Heart left ventricle (tissue), 16 donors: ENCODE measurements at regions of chr6 and their contacts with region 1.

Region 1: GRCh38 chr6:170137176-170137891 is 153.5 kb downstream of the DLL1 start:
- DNase-seq: peak; percentile 64 to 80 (median 67)
- ATAC-seq: peak; percentile 68 to 87 (median 74)
- H3K4me3 ChIP-seq: peak overlapping the region in 8 of 12 donors; percentile 5 to 47 (median 35)
- H3K27ac ChIP-seq: peak overlapping the region; percentile 74 to 91 (median 82)
- H3K4me1 ChIP-seq: peaks cover 4 to 47% (median 24%) of the 10 kb centered on the region in 12 donors
- H3K27me3 ChIP-seq: no peaks in the 10 kb centered on the region
- CTCF ChIP-seq: no peak
- POLR2A ChIP-seq: no peak

Region 2: DNA sequence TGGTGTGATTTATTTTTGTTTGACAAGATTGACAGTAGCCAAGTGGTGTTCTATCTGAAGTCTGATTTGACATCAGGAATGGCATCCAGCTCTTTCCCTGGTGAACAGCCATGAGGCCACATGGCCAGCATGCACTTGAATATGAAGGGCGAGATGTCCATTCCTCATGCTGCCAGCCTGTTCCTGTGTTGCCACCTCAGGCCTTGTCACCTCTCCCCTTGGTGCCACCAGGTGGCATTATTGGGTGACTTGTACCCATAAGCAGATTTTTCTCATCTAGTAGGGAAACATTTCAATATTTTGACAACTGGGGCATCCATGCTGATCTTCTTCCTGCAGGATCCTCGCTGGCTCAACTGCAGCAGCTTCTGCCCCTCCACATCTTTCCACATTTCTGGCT is 186.8 kb before region 1 on chr6:
- intact Hi-C with region 1: no loop called
- DNase-seq: no peak
- ATAC-seq: peak in 2 of 4 donors; percentile 54 to 62
- H3K4me3 ChIP-seq: no peak overlapping the region
- H3K27ac ChIP-seq: no peak overlapping the region
- H3K4me1 ChIP-seq: no peaks in the 10 kb centered on the region
- H3K27me3 ChIP-seq: no peaks in the 10 kb centered on the region
- CTCF ChIP-seq: peak; percentile 4 to 45 (median 24)
- POLR2A ChIP-seq: no peak

Region 3: GRCh38 chr6:170024952-170025911 is 112.1 kb before region 1 on chr6:
- intact Hi-C with region 1: loop called in 2 of 10 experiments (anchors 5 kb)
- DNase-seq: peak in 2 of 5 donors; percentile 41 to 80
- ATAC-seq: peak; percentile 39 to 75 (median 54)
- H3K4me3 ChIP-seq: no peak overlapping the region
- H3K27ac ChIP-seq: peak overlapping the region in 2 of 12 donors; percentile 8 to 55
- H3K4me1 ChIP-seq: peaks cover 0 to 14% (median 3%) of the 10 kb centered on the region in 12 donors
- H3K27me3 ChIP-seq: peaks cover 0 to 13% (median 4%) of the 10 kb centered on the region in 9 donors
- CTCF ChIP-seq: no peak
- POLR2A ChIP-seq: no peak

Region 4: GRCh38 chr6:170049641-170050561 is 87.4 kb before region 1 on chr6:
- intact Hi-C with region 1: loop called in 2 of 10 experiments (anchors 5 kb)
- DNase-seq: peak; percentile 70 to 94 (median 88)
- ATAC-seq: peak; percentile 83 to 91 (median 91)
- H3K4me3 ChIP-seq: no peak overlapping the region
- H3K27ac ChIP-seq: peak overlapping the region in 11 of 12 donors; percentile 10 to 88 (median 57)
- H3K4me1 ChIP-seq: peaks cover 0 to 36% (median 10%) of the 10 kb centered on the region in 12 donors
- H3K27me3 ChIP-seq: no peaks in the 10 kb centered on the region
- CTCF ChIP-seq: no peak
- POLR2A ChIP-seq: no peak

Region 5: DNA sequence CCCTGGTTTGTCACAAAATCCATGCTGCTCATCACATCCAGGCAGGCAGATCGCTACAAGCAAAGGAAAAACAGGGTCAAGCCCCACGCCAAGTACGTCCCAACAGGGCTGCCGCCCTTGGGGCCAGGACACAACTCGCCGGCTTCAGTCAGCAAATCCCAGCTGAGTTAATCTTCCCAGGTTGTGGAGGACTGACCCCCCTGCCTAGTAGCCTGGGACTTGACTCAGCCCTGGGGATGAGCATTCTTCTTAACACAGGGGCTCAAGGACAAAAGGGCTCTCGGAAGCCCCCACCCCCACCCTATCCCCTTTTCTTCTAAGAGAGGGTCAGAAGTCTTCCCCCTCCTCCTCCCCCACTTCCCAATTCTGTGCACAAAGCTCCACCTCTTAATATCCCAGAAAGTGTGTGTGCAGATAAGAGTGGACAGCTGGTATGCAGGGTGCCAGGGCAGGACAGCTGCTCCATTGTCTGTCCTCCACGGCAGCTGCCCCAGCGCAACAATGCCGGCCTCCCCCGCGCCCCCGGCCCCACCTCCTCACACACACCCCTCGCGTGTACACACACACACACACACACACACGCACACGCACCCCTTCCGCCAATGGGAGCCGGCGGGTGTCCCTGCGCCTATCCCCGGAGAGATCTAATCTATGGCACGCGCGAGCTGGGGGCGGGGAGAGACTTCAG is 149.1 kb after region 1 on chr6:
- intact Hi-C with region 1: loop called in 2 of 10 experiments (anchors 5 to 10 kb)
- DNase-seq: peak in 2 of 5 donors; percentile 72 to 74
- ATAC-seq: peak; percentile 9 to 31 (median 24)
- H3K4me3 ChIP-seq: peak overlapping the region in 7 of 12 donors; percentile 3 to 95 (median 80)
- H3K27ac ChIP-seq: peak overlapping the region in 8 of 12 donors; percentile 31 to 90 (median 82)
- H3K4me1 ChIP-seq: peaks cover 8 to 58% (median 38%) of the 10 kb centered on the region in 12 donors
- H3K27me3 ChIP-seq: peaks cover 0 to 47% (median 0%) of the 10 kb centered on the region in 9 donors
- CTCF ChIP-seq: no peak
- POLR2A ChIP-seq: no peak